ENCODE measurements at regions of chr15 and their contacts with region 1.

Region 1: GRCh38 chr15:66497502-66498455 is at the start of gene SNAPC5:
- DNase-seq: peak; percentile 72
- ATAC-seq: peak; percentile 90
- H3K4me3 ChIP-seq: peak within 1 kb of the TSS; percentile 87
- H3K27ac ChIP-seq: peak within 1 kb of the TSS; percentile 80
- H3K4me1 ChIP-seq: peaks cover 4% of the 10 kb centered on the region; the same call in 1 of the 2 replicates
- H3K27me3 ChIP-seq: no peaks in the 10 kb centered on the region
- CTCF ChIP-seq: peak; percentile 85 to 98 (median 94)
- EP300 ChIP-seq: no peak
- POLR2A ChIP-seq: peak; percentile 93
- RAD21 ChIP-seq: no peak; the same call in 1 of the 2 replicates
- polyA plus RNA-seq, gene SNAPC5: 53.0 to 53.5 TPM

Region 2: DNA sequence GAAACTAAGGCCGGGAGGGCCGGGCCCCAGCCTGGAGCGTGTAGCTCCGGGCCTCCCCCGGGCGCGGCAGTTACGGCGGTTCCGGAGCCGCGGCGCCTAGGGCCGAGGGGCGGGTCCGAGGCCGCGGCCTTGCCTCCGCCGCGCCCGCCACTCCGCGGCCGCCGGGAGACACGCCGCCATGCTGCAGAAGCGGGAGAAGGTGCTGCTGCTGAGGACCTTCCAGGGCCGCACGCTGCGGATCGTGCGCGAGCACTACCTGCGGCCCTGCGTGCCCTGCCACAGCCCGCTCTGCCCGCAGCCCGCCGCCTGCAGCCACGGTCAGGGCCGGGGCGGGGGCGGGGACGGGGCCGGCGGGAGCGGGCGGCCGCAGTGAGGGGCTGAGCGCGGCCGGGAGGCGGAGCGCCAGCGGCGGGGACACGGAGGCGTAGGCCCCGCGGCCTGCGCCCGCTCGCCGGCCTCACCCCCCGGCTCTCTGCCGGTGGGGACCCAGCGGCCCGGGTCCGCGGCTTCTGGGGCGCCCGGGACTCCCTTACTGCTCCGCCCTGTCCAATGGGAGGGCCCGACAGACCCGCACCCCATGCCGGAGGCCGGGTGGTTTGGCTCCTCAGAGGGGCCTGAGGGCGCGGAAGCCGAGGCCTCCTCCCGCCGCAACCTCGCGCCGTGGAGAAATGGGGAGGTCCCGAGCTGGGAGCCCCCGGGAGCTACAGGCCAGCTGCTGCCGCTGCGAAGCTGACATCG is 204.2 kb before region 1 on chr15 and contains the start of gene DIS3L:
- CTCF ChIA-PET with region 1: interaction called, 103 read pairs
- POLR2A ChIA-PET with region 1: no interaction called
- RAD21 ChIA-PET with region 1: interaction called, 20 read pairs
- SMC1A ChIA-PET with region 1: interaction called, 24 read pairs
- in situ Hi-C with region 1: no loop called
- intact Hi-C with region 1: loop called (anchors 5 kb)
- DNase-seq: peak; percentile 8
- ATAC-seq: peak; percentile 82
- H3K4me3 ChIP-seq: peak within 1 kb of the TSS; percentile 71
- H3K27ac ChIP-seq: peak within 1 kb of the TSS; percentile 76
- H3K4me1 ChIP-seq: peaks cover 3% of the 10 kb centered on the region; the same call in 1 of the 2 replicates
- H3K27me3 ChIP-seq: no peaks in the 10 kb centered on the region
- CTCF ChIP-seq: no peak
- EP300 ChIP-seq: no peak
- POLR2A ChIP-seq: peak; percentile 86
- RAD21 ChIP-seq: no peak
- polyA plus RNA-seq, gene DIS3L: 7.6 to 12.8 TPM

Region 3: DNA sequence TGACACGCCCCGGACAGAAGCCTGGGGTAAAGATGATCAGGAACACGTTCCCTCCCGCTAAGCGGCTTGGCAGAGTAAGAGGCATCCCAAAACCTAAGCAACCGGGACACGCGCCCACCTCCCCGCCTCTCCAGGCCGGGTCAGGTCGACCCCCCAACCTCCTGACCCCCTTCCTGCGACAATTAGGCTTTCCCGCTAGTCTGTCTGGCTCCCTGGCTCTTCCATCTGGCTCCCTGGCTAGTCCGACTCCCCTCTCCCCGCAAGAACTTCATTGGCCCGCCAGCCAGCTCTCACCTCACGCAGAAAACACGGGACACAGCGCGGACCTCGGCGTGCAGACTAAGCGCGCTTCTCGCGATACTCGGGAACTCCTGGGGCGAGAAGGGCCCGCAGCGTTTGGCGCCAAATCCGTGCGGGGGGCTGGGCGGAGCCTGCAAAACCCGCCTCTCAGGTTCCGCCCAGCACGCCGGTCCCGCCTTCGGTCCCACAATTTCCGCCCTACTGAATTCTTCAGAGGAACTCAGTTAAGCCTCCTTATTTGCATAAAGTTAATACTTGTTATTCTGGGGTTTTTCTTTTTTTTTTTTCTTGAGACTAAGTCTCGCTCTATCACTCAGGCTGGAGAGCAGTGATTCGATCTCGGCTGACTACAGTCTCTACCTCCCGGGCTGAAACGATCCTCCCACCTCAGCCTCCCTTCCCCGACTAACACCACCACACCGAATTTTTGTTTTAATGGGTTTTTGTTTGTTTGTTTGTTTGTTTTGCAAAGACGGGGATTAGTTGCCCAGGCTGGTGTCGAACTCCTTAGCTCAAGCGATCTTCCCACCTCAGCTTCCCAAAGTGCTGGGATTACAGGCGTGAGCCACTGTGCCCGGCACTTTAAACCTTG is 141.2 kb before region 1 on chr15 and contains the start of gene TIPIN:
- CTCF ChIA-PET with region 1: interaction called, 23 read pairs
- POLR2A ChIA-PET with region 1: interaction called, 3 read pairs
- RAD21 ChIA-PET with region 1: interaction called, 17 read pairs
- SMC1A ChIA-PET with region 1: interaction called, 8 read pairs
- in situ Hi-C with region 1: loop called (anchors 5 kb)
- intact Hi-C with region 1: loop called (anchors 1 kb)
- DNase-seq: peak; percentile 87
- ATAC-seq: peak; percentile 96
- H3K4me3 ChIP-seq: peak within 1 kb of the TSS; percentile 99
- H3K27ac ChIP-seq: peak within 1 kb of the TSS; percentile 76
- H3K4me1 ChIP-seq: peaks cover 8% of the 10 kb centered on the region
- H3K27me3 ChIP-seq: no peaks in the 10 kb centered on the region
- CTCF ChIP-seq: no peak
- EP300 ChIP-seq: no peak; a peak in 1 of 4 replicates
- POLR2A ChIP-seq: peak; percentile 97
- RAD21 ChIP-seq: no peak
- polyA plus RNA-seq, gene TIPIN: 52.8 to 59.2 TPM

Region 4: DNA sequence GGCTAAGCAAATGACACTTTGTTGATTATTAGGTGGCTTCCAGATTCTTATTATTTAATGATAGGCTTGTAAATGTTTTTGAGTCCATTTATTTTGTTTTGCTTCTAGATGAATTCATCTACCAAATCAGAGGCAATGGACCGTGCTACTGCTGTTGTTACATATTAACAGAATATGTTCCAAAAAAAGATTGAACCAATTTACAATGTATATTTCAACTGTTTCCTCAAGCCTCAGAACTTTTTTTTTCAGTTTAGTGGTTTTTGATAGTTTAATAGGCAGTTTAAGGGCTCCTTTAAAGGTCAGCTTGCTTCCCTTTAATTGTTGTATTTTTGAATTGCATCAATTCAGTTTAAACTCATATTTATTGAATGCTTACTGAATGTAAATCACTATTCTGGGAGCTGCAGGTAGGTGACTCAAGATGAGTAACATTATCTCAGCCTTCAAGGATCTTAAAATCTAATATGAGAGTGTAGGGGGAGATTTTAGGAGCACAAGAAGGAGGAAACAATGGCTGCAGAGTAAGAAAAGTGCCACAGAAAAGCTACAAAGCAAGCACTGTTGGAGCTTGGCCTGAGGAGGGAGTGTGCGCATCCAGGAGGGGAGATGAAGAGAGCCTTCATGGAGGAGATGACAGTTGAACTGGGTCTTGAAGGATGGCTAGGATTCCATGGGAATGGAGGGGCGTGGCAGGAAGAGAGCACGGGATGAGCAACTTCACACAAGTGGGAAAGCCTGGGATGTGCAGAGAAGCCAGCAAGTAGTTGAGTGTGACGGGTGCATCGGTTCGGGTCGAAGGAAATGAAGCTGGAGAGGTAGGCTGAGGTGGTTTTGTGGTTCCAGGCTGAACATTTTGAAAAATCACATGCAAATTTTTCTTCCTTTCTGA is 96.4 kb before region 1 on chr15:
- CTCF ChIA-PET with region 1: interaction called, 33 read pairs
- POLR2A ChIA-PET with region 1: interaction called, 3 read pairs
- RAD21 ChIA-PET with region 1: interaction called, 18 read pairs
- SMC1A ChIA-PET with region 1: interaction called, 6 read pairs
- in situ Hi-C with region 1: no loop called
- intact Hi-C with region 1: no loop called
- DNase-seq: no peak
- ATAC-seq: peak; percentile 72
- H3K4me3 ChIP-seq: peak overlapping the region; percentile 64; the same call in 1 of the 2 replicates
- H3K27ac ChIP-seq: peak overlapping the region; percentile 74; the same call in 1 of the 2 replicates
- H3K4me1 ChIP-seq: peaks cover 55% of the 10 kb centered on the region
- H3K27me3 ChIP-seq: no peaks in the 10 kb centered on the region
- CTCF ChIP-seq: peak; percentile 18 to 36 (median 30); a peak in 4 of 6 replicates
- EP300 ChIP-seq: no peak
- POLR2A ChIP-seq: no peak
- RAD21 ChIP-seq: peak; percentile 27; the same call in 1 of the 2 replicates

Region 5: GRCh38 chr15:66472176-66472999 is 25.4 kb before region 1 on chr15:
- CTCF ChIA-PET with region 1: interaction called, 44 read pairs
- POLR2A ChIA-PET with region 1: interaction called, 5 read pairs
- RAD21 ChIA-PET with region 1: interaction called, 15 read pairs
- SMC1A ChIA-PET with region 1: interaction called, 27 read pairs
- in situ Hi-C with region 1: no loop called
- intact Hi-C with region 1: no loop called
- DNase-seq: peak; percentile 78
- ATAC-seq: peak; percentile 94
- H3K4me3 ChIP-seq: no peak overlapping the region
- H3K27ac ChIP-seq: peak overlapping the region; percentile 69
- H3K4me1 ChIP-seq: peaks cover 35% of the 10 kb centered on the region
- H3K27me3 ChIP-seq: no peaks in the 10 kb centered on the region
- CTCF ChIP-seq: no peak
- EP300 ChIP-seq: no peak
- POLR2A ChIP-seq: no peak
- RAD21 ChIP-seq: no peak

Measured in GM12878 (cell line).